B cell (primary cell): ENCODE measurements at regions of chr12 and their contacts with region 1.

Region 1: DNA sequence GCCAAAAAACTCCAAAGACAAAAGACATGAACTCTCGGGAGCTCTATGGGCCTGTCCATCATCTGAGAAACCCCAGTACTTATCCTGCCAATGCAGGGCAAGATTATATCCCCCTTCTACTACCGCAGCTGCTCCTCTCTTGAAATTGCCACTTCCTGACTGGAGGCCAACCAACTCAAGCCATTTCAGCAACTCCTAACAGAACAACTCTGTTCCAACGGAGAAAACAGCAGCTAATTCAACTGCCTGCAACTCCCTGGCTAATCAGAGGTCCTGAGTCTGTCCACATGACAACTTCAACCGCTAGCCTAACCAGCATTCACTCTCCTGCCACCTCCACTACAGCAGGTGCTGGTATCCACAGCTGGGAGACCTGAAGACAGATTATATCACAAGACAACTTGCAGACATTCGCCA is 24.1 kb downstream of the CEP83 start:
- DNase-seq: peak; percentile 11
- ATAC-seq: no peak
- H3K4me3 ChIP-seq: no peak overlapping the region
- H3K4me3 Mint-ChIP-seq: no peak overlapping the region
- H3K27ac ChIP-seq: no peak overlapping the region
- H3K27ac Mint-ChIP-seq: no peak overlapping the region
- H3K4me1 ChIP-seq: peaks cover 6 to 8% of the 10 kb centered on the region in 2 donors
- H3K4me1 Mint-ChIP-seq: peaks cover 11% of the 10 kb centered on the region
- H3K27me3 ChIP-seq: no peaks in the 10 kb centered on the region
- H3K27me3 Mint-ChIP-seq: no peaks in the 10 kb centered on the region
- CTCF ChIP-seq: no peak

Region 2: GRCh38 chr12:93918262-93918661 is 517.3 kb before region 1 on chr12:
- CTCF ChIA-PET with region 1: no interaction called
- POLR2A ChIA-PET with region 1: no interaction called
- intact Hi-C with region 1: no loop called
- DNase-seq: no peak
- ATAC-seq: no peak
- H3K4me3 ChIP-seq: no peak overlapping the region
- H3K4me3 Mint-ChIP-seq: no peak overlapping the region
- H3K27ac ChIP-seq: no peak overlapping the region
- H3K27ac Mint-ChIP-seq: no peak overlapping the region
- H3K4me1 ChIP-seq: no peaks in the 10 kb centered on the region
- H3K4me1 Mint-ChIP-seq: no peaks in the 10 kb centered on the region
- H3K27me3 ChIP-seq: no peaks in the 10 kb centered on the region
- H3K27me3 Mint-ChIP-seq: peaks cover 20% of the 10 kb centered on the region
- CTCF ChIP-seq: no peak

Region 3: GRCh38 chr12:94126067-94126466 is 309.5 kb before region 1 on chr12:
- CTCF ChIA-PET with region 1: interaction called, 11 read pairs
- POLR2A ChIA-PET with region 1: no interaction called
- intact Hi-C with region 1: no loop called
- DNase-seq: no peak
- ATAC-seq: no peak
- H3K4me3 ChIP-seq: no peak overlapping the region
- H3K4me3 Mint-ChIP-seq: no peak overlapping the region
- H3K27ac ChIP-seq: no peak overlapping the region
- H3K27ac Mint-ChIP-seq: peak overlapping the region; percentile 38
- H3K4me1 ChIP-seq: peaks cover 41% of the 10 kb centered on the region in 2 donors
- H3K4me1 Mint-ChIP-seq: peaks cover 43% of the 10 kb centered on the region
- H3K27me3 ChIP-seq: no peaks in the 10 kb centered on the region
- H3K27me3 Mint-ChIP-seq: peaks cover 5% of the 10 kb centered on the region
- CTCF ChIP-seq: no peak

Region 4: GRCh38 chr12:94133964-94134795 is 301.3 kb before region 1 on chr12:
- CTCF ChIA-PET with region 1: interaction called, 92 read pairs
- POLR2A ChIA-PET with region 1: no interaction called
- intact Hi-C with region 1: loop called (anchors 1 kb)
- DNase-seq: peak; percentile 74
- ATAC-seq: peak; percentile 91
- H3K4me3 ChIP-seq: no peak overlapping the region
- H3K4me3 Mint-ChIP-seq: no peak overlapping the region
- H3K27ac ChIP-seq: no peak overlapping the region
- H3K27ac Mint-ChIP-seq: no peak overlapping the region
- H3K4me1 ChIP-seq: peaks cover 3 to 10% of the 10 kb centered on the region in 2 donors
- H3K4me1 Mint-ChIP-seq: peaks cover 10% of the 10 kb centered on the region
- H3K27me3 ChIP-seq: no peaks in the 10 kb centered on the region
- H3K27me3 Mint-ChIP-seq: peaks cover 3% of the 10 kb centered on the region
- CTCF ChIP-seq: peak; percentile 89

Region 5: GRCh38 chr12:94532490-94533422 is 97.2 kb after region 1 on chr12:
- CTCF ChIA-PET with region 1: interaction called, 3 read pairs
- POLR2A ChIA-PET with region 1: no interaction called
- intact Hi-C with region 1: loop called (anchors 1 kb)
- DNase-seq: peak; percentile 78
- ATAC-seq: peak; percentile 81
- H3K4me3 ChIP-seq: no peak overlapping the region
- H3K4me3 Mint-ChIP-seq: no peak overlapping the region
- H3K27ac ChIP-seq: no peak overlapping the region
- H3K27ac Mint-ChIP-seq: no peak overlapping the region
- H3K4me1 ChIP-seq: no peaks in the 10 kb centered on the region
- H3K4me1 Mint-ChIP-seq: peaks cover 5% of the 10 kb centered on the region
- H3K27me3 ChIP-seq: no peaks in the 10 kb centered on the region
- H3K27me3 Mint-ChIP-seq: peaks cover 3% of the 10 kb centered on the region
- CTCF ChIP-seq: peak; percentile 81